OCI-LY7 (cell line): ENCODE measurements at regions of chr1 and their contacts with region 1.

Region 1: DNA sequence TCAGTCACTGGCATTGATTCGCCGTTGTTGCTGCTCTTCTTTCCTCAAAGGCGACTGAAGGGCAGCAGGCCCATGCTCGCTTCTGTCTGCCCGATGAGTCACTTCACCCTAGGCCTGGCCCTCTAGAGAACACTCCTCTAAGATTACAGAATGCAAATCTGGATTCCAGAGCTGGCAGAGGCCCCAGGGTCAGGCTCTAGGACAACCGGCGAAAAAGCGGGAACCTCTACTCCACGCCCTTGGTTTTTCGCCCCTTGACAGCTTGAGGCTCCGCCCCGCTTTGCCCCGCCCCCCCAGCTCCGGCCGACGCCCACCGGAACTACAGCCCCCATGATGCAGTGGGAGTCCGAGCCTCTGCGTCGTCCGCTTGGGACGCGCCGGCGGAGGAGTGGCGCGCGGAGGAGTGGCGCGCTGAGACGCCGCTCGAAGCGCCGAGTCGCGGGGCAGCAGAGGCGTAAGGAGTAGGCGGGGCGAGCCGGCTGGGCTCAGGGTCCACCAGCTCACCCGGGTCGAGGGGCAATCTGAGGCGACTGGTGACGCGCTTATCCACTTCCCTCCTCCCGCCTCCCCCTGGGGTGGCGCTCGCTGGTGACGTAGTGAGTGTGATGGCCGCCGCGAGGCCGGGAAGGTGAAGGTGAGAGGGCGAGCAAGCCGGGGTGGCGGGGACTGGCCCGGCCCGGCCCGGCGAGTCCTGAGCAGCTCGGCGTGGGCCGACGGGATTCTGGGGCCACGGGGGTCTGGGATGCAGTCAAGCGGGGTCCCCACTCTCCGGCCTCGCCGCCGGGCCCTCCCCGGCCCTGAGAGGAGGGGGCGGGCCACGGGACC is at the start of gene MFN2:
- DNase-seq: peak; percentile 93
- H3K4me3 ChIP-seq: peak within 1 kb of the TSS; percentile 93
- H3K27ac ChIP-seq: peak within 1 kb of the TSS; percentile 60
- H3K4me1 ChIP-seq: peaks cover 21% of the 10 kb centered on the region
- CTCF ChIP-seq: no peak
- total RNA-seq, gene MFN2: 28.3 and 32.2 TPM in 2 replicates

Region 2: DNA sequence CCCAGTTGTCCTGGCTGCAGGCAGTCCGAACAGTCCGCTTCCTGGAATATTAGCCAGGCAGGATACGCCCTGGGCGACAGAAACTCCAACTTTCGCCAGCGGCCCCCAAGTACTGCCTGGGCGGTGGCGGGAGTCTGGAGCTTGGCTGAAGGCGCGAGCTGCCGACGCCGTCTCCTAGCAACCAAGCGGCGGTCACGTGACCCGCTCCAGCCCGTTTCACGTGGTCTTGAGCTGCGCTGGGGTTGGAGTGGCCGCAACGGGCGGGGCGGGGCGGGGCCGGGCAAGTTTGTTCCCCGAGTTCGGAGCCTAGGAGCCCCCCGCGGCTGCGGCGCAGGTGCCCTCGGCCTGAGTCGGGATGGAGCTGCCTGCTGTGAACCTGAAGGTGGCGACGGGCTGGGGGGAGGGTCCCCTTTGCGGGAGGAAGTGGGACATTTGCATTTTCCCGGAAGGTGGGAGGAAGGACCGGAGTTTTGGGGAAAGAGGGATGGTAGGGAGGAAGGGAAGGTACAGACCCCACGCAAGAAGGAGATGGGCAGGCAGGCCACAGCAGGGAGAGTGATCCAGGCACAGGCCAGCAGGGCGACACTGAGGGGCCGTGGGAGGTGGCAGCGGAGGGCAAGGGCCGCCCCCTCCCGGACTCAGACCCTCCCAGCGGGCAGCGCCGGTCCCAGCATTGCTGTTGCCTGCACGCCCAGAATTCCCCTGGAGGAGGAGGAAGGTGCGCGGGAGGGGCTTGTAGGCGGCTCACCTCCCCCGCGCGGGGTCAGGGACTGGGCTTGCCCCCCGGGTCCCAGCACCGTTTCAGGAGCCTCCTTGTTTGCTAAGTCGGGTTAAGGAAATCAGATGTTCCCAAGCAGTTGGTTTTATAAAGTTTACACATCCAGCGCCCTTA is 244.0 kb before region 1 on chr1 and contains the start of gene AGTRAP:
- CTCF ChIA-PET with region 1: no interaction called
- POLR2A ChIA-PET with region 1: no interaction called
- intact Hi-C with region 1: loop called (anchors 10 kb)
- DNase-seq: peak; percentile 93
- H3K4me3 ChIP-seq: peak within 1 kb of the TSS; percentile 81
- H3K27ac ChIP-seq: peak within 1 kb of the TSS; percentile 48
- H3K4me1 ChIP-seq: peaks cover 17% of the 10 kb centered on the region
- CTCF ChIP-seq: peak; percentile 31
- total RNA-seq, gene AGTRAP: 20.5 and 40.0 TPM in 2 replicates

Region 3: GRCh38 chr1:11817192-11817591 is 162.9 kb before region 1 on chr1:
- CTCF ChIA-PET with region 1: no interaction called
- POLR2A ChIA-PET with region 1: no interaction called
- intact Hi-C with region 1: no loop called
- DNase-seq: no peak
- H3K4me3 ChIP-seq: no peak overlapping the region
- H3K27ac ChIP-seq: no peak overlapping the region
- H3K4me1 ChIP-seq: peaks cover 41% of the 10 kb centered on the region
- CTCF ChIP-seq: no peak

Region 4: DNA sequence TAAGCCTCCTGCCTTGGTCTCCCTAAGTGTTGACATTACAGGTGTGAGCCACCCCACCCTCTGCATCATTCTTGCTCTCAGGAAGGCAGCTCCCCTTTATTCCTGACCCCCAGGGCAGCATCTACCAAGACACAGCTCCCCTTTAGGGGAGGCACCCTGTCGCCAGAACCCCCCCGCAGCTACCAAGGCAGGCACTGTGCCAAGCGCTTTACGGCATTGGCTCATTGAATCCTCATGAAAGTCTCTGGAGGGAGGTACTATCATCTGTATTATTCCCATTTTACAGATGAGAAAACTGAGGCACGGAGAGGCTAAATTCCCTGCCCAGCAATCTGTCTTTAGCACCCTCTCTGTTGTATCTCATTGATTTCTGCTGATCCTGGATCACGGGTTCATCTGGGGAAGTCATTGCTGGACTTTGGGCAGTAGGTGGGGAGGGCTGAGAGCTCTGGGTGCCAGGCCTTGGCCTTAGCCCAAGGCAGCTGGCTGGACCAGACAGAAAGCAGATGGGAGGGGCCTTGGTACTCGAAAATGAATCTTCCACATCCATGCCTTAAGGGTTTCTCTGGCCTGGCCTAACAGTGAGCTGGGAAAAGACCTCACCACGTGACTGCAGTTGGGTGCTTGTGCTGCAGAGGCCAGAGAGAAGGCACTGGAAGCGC is 39.7 kb before region 1 on chr1:
- CTCF ChIA-PET with region 1: no interaction called
- POLR2A ChIA-PET with region 1: no interaction called
- intact Hi-C with region 1: no loop called
- DNase-seq: no peak
- H3K4me3 ChIP-seq: no peak overlapping the region
- H3K27ac ChIP-seq: no peak overlapping the region
- H3K4me1 ChIP-seq: no peaks in the 10 kb centered on the region
- CTCF ChIP-seq: no peak

Region 5: GRCh38 chr1:12031039-12031980 is 51.2 kb after region 1 on chr1:
- CTCF ChIA-PET with region 1: no interaction called
- POLR2A ChIA-PET with region 1: interaction called, 5 read pairs
- intact Hi-C with region 1: loop called (anchors 1 kb)
- DNase-seq: peak; percentile 63
- H3K4me3 ChIP-seq: no peak overlapping the region
- H3K27ac ChIP-seq: no peak overlapping the region
- H3K4me1 ChIP-seq: peaks cover 11% of the 10 kb centered on the region
- CTCF ChIP-seq: peak; percentile 86

Region 6: DNA sequence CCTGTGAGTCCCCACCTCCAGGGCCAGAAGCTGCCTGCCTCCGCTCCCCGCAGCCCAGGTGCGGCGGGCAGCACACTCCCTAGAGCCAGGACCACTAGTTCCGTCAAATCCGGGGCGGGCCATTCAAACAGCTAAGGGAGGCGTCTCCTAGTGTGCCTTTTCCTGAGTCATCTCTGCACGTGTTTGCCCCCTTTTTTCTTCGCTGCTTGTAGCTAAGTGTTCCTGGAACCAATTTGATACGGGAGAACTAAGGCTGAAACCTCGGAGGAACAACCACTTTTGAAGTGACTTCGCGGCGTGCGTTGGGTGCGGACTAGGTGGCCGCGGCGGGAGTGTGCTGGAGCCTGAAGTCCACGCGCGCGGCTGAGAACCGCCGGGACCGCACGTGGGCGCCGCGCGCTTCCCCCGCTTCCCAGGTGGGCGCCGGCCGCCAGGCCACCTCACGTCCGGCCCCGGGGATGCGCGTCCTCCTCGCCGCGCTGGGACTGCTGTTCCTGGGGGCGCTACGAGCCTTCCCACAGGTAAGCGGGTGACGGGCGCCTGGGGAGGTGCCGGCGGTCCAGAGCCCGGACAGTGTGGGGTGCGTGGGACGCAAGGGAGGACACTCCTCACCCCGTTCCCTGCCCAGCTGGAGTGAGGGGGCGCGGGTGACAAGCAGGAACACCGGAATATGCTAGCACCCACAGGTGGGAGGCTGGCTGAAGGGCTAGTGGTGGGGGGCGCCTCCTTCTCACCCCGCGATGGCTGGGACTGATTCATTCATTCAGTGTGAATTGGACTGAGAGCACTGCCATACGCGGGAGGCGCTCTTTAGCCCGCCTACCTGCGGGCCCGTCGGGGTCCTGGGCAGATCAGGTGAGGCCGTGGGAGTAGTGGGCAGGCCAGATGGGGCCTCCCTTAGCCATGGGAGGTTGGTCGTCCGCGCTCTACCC is 83.3 kb after region 1 on chr1 and contains the start of gene TNFRSF8:
- CTCF ChIA-PET with region 1: no interaction called
- POLR2A ChIA-PET with region 1: no interaction called
- intact Hi-C with region 1: no loop called
- DNase-seq: no peak
- H3K4me3 ChIP-seq: no peak within 1 kb of the TSS
- H3K27ac ChIP-seq: no peak within 1 kb of the TSS
- H3K4me1 ChIP-seq: peaks cover 19% of the 10 kb centered on the region
- CTCF ChIP-seq: no peak
- total RNA-seq, gene TNFRSF8: not detected in 2 replicates

Region 7: GRCh38 chr1:12152113-12152891 is 172.2 kb after region 1 on chr1:
- CTCF ChIA-PET with region 1: no interaction called
- POLR2A ChIA-PET with region 1: no interaction called
- intact Hi-C with region 1: no loop called
- DNase-seq: peak; percentile 92
- H3K4me3 ChIP-seq: peak overlapping the region; percentile 26
- H3K27ac ChIP-seq: peak overlapping the region; percentile 85
- H3K4me1 ChIP-seq: peaks cover 63% of the 10 kb centered on the region
- CTCF ChIP-seq: no peak